Endothelial cell of umbilical vein (primary cell): ENCODE measurements at regions of chr1 and their contacts with region 1.

Region 1: GRCh38 chr1:28112388-28113241 is 24.2 kb upstream of the EYA3 start:
- DNase-seq: peak; percentile 70
- H3K4me3 ChIP-seq: no peak overlapping the region
- H3K27ac ChIP-seq: peak overlapping the region; percentile 69
- H3K4me1 ChIP-seq: peaks cover 21% of the 10 kb centered on the region
- H3K27me3 ChIP-seq: no peaks in the 10 kb centered on the region
- CTCF ChIP-seq: no peak
- POLR2A ChIP-seq: no peak

Region 2: DNA sequence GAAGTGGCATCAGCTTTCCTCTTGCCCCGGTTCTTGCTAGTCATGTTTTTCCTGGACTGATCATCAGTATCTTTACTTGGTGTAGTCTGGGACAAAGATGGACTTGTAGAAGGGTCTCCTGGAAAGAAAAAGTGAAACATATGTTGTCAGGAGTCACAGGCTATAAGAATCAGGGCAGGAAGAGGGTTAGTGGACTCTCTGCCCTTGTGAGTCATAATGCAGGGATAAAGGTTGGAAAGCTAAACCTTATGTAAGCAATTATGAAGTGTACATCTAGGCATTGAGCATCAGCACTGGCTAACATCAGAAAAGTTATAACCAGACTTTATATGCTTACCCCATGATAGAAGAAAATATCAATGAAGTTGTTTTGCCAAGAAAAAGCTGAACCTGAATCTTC is 101.6 kb before region 1 on chr1:
- CTCF ChIA-PET with region 1: no interaction called
- POLR2A ChIA-PET with region 1: interaction called, 12 read pairs
- dilution Hi-C with region 1: no loop called
- intact Hi-C with region 1: no loop called
- DNase-seq: no peak
- H3K4me3 ChIP-seq: no peak overlapping the region
- H3K27ac ChIP-seq: no peak overlapping the region
- H3K4me1 ChIP-seq: peaks cover 3% of the 10 kb centered on the region
- H3K27me3 ChIP-seq: no peaks in the 10 kb centered on the region
- CTCF ChIP-seq: no peak
- POLR2A ChIP-seq: no peak

Region 3: GRCh38 chr1:28160782-28161266 is 48.2 kb after region 1 on chr1:
- CTCF ChIA-PET with region 1: interaction called, 4 read pairs
- POLR2A ChIA-PET with region 1: no interaction called
- dilution Hi-C with region 1: no loop called
- intact Hi-C with region 1: loop called (anchors 5 kb)
- DNase-seq: peak; percentile 89
- H3K4me3 ChIP-seq: no peak overlapping the region
- H3K27ac ChIP-seq: peak overlapping the region; percentile 89
- H3K4me1 ChIP-seq: peaks cover 6% of the 10 kb centered on the region
- H3K27me3 ChIP-seq: no peaks in the 10 kb centered on the region
- CTCF ChIP-seq: no peak
- POLR2A ChIP-seq: no peak